MCF 10A (cell line): ENCODE measurements at regions of chr14 and their contacts with region 1.

Region 1: GRCh38 chr14:75132382-75133086 is 5.7 kb upstream of the NEK9 start:
- DNase-seq: peak; percentile 83
- H3K4me3 Mint-ChIP-seq: no peak overlapping the region
- H3K27ac Mint-ChIP-seq: peak overlapping the region; percentile 77
- H3K4me1 Mint-ChIP-seq: peaks cover 33% of the 10 kb centered on the region
- H3K27me3 Mint-ChIP-seq: no peaks in the 10 kb centered on the region
- CTCF ChIP-seq: peak; percentile 67

Region 2: DNA sequence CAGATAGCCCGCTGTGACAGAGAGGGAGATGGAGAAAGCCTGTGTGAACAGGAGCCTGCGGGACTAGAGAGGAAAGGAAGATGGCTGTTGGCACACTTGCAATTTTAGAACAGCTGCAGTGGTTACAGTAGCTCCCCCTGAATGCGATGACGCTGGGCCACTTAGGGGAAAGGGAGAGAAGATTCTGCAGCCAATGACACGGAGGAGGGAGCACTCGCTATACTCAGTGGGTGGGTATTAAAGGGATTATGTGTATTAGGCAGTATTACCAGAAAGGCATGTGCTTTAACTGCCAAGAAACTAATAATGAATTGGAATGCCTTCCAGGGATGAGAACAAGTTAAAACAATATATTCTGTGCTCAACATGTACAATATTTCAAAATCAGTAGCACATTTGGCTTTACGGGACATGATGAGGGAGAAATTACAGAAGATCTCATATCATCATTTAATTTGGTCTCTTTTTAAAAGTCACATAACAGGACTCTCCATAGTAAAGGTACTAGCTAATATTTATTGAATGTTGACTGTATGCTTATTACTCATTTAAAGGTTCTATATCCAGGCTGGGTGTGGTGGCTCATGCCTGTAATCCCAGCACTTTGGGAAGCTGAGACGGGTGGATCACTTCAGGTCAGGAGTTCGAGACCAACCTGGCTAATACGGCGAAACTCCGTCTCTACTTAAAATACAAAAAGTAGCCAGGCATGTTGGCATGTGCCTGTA is 110.2 kb after region 1 on chr14:
- CTCF ChIA-PET with region 1: interaction called, 3 read pairs
- POLR2A ChIA-PET with region 1: interaction called, 10 read pairs
- intact Hi-C with region 1: no loop called
- DNase-seq: peak; percentile 95
- H3K4me3 Mint-ChIP-seq: peak overlapping the region; percentile 2
- H3K27ac Mint-ChIP-seq: peak overlapping the region; percentile 57
- H3K4me1 Mint-ChIP-seq: peaks cover 10% of the 10 kb centered on the region
- H3K27me3 Mint-ChIP-seq: no peaks in the 10 kb centered on the region
- CTCF ChIP-seq: no peak